Calu3 (cell line): ENCODE measurements at regions of chr11 and their contacts with region 1.

Region 1: GRCh38 chr11:78406538-78407196 is 11.0 kb downstream of the GAB2 start:
- DNase-seq: no peak
- H3K4me3 Mint-ChIP-seq: no peak overlapping the region
- H3K27ac Mint-ChIP-seq: no peak overlapping the region
- H3K4me1 Mint-ChIP-seq: no peaks in the 10 kb centered on the region
- H3K27me3 Mint-ChIP-seq: no peaks in the 10 kb centered on the region
- CTCF ChIP-seq: no peak

Region 2: DNA sequence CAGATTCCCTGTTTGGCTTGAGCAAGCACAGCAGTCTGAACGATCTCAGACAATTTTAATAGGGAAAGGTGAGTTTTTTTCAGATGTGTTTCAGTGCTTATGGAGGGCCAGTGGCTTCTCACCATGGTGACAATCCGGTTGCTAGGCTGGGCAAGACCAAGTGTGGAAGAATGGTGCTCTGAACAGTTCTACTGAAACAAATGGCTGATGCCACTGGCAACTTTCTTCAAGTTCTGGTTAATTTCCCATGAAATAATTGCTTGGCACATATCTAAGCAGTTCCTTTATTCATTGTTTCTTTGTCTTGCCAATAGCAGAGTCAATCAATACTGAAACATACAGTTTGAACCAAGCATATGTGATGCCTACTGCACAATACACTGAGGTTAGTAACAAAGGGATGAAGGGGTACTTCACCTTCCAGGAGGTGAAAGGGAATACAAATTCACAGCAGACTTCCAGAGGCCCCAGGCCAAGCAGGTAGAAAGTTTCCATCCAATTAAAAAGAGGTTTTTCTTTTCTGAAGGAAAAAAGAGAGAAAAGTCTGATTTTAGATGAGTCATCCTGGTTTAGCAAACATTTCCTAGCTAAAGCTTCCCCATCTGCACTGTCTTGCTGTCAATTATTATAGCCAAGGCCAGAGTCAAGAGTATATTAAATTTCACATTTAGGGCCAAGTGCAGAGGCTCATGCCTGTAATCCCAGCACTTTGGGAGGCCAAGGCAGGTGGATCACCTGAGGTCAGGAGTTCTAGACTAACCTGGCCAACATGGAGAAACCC is 305.8 kb before region 1 on chr11:
- CTCF ChIA-PET with region 1: no interaction called
- intact Hi-C with region 1: no loop called
- DNase-seq: no peak
- H3K4me3 Mint-ChIP-seq: no peak overlapping the region
- H3K27ac Mint-ChIP-seq: no peak overlapping the region
- H3K4me1 Mint-ChIP-seq: no peaks in the 10 kb centered on the region
- H3K27me3 Mint-ChIP-seq: no peaks in the 10 kb centered on the region
- CTCF ChIP-seq: no peak

Region 3: GRCh38 chr11:78349624-78350023 is 57.0 kb before region 1 on chr11:
- CTCF ChIA-PET with region 1: no interaction called
- intact Hi-C with region 1: loop called (anchors 10 kb)
- DNase-seq: no peak
- H3K4me3 Mint-ChIP-seq: no peak overlapping the region
- H3K27ac Mint-ChIP-seq: no peak overlapping the region
- H3K4me1 Mint-ChIP-seq: peaks cover 23% of the 10 kb centered on the region
- H3K27me3 Mint-ChIP-seq: no peaks in the 10 kb centered on the region
- CTCF ChIP-seq: no peak

Region 4: GRCh38 chr11:78514922-78515502 is 108.3 kb after region 1 on chr11:
- CTCF ChIA-PET with region 1: no interaction called
- intact Hi-C with region 1: no loop called
- DNase-seq: no peak
- H3K4me3 Mint-ChIP-seq: no peak overlapping the region
- H3K27ac Mint-ChIP-seq: no peak overlapping the region
- H3K4me1 Mint-ChIP-seq: no peaks in the 10 kb centered on the region
- H3K27me3 Mint-ChIP-seq: no peaks in the 10 kb centered on the region
- CTCF ChIP-seq: no peak